Common myeloid progenitor, CD34-positive (primary cell): ENCODE measurements at regions of chr6 and their contacts with region 1.

Region 1: DNA sequence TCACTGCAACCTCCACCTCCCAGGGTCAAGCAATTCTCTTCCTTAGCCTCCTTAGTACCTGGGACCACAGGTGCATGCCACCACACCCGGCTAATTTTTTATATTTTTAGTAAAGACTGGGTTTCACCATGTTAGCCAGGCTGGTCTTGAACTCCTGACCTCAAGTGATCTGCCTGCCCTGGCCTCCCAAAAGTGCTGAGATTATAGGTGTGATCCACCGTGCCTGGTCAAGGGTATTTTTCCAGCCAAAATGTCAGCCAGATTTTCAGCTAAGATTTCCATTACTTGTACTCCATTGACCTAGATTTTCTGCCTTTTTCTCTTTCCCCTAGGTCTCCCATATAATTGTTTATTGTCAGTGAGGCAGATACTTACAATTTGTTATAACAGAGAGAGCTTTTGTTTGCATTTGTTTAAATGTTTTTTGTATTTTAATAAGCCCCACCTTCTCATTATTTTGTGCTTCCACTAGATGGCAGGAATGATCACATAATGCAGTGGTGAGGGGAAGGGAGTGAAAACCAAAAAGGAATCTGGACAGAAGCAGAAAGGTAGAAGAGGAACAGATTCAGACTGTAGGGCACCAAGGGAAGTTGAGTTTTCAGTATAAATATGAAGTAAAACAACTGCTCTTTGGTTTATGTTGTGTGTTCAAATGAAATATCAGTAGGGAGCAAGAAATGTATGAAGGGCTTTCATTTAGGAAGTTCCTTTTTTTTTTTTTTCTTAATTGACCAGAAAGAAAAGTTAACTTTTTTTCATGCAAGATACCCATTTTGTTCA is 29.7 kb downstream of the RPF2 start:
- DNase-seq: peak; percentile 55 to 82 (median 80)
- H3K4me3 ChIP-seq: no peak overlapping the region
- H3K27ac ChIP-seq: no peak overlapping the region
- H3K4me1 ChIP-seq: no peaks in the 10 kb centered on the region
- H3K27me3 ChIP-seq: no peaks in the 10 kb centered on the region

Region 2: GRCh38 chr6:110976575-110976974 is 35.0 kb before region 1 on chr6:
- CTCF ChIA-PET with region 1: no interaction called
- POLR2A ChIA-PET with region 1: no interaction called
- DNase-seq: no peak
- H3K4me3 ChIP-seq: no peak overlapping the region
- H3K27ac ChIP-seq: no peak overlapping the region
- H3K4me1 ChIP-seq: peaks cover 0 to 4% (median 1%) of the 10 kb centered on the region in 4 experiments
- H3K27me3 ChIP-seq: no peaks in the 10 kb centered on the region

Region 3: GRCh38 chr6:110999634-111000270 is 11.8 kb before region 1 on chr6:
- CTCF ChIA-PET with region 1: interaction called, 13 read pairs
- POLR2A ChIA-PET with region 1: no interaction called
- DNase-seq: peak; percentile 57 to 79 (median 77)
- H3K4me3 ChIP-seq: no peak overlapping the region
- H3K27ac ChIP-seq: no peak overlapping the region
- H3K4me1 ChIP-seq: no peaks in the 10 kb centered on the region
- H3K27me3 ChIP-seq: no peaks in the 10 kb centered on the region

Region 4: DNA sequence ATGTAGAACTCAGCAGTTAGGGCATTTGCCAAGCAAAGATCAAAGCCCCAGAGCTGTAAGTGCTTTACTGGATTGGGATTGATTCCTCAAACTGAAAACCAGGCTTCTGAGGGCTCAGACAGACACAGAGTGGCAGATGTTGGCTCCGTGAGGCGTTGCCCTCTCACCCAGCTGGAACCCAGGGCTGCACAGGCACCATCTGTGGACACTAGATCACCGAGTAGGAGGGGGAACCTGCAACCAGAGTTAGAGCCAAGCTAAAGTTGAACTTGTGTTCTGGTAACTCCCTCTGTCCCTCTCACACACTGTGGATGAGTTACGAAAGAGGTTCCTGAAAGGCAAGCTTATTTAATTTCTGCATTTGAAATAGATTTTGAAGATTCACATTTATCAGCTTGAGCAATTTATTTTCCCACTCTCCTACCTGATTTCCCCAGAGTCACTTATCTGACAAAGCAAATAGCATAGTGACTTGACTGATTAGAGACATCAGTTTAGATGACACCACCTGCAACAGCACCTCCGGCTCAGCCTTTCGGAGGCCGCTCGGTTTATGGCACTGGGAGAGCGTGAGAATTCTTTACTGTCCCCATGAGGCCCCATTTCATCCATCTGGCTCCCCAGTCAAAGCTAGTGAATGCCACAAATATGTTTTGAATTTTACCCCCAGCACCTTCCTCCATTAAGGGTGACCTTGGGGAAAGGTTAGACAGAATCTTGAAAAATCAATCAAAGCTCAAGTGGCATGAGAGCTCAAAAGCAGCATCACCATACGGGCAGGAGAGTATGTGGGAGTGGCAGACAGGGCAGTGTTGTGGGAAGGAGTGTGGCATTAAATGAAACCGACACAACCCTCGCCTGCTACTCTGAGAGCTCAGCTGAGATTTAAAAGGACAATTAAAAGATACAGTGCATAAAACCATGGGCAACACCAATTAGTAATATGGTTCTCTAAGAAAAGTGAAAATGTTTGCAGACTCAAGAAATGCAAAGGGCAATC is 18.8 kb after region 1 on chr6:
- CTCF ChIA-PET with region 1: interaction called, 74 read pairs
- POLR2A ChIA-PET with region 1: interaction called, 6 read pairs
- DNase-seq: no peak
- H3K4me3 ChIP-seq: no peak overlapping the region
- H3K27ac ChIP-seq: no peak overlapping the region
- H3K4me1 ChIP-seq: no peaks in the 10 kb centered on the region
- H3K27me3 ChIP-seq: no peaks in the 10 kb centered on the region

Region 5: GRCh38 chr6:111057074-111057752 is 45.7 kb after region 1 on chr6:
- CTCF ChIA-PET with region 1: interaction called, 11 read pairs
- POLR2A ChIA-PET with region 1: no interaction called
- DNase-seq: peak; percentile 39 to 62 (median 60)
- H3K4me3 ChIP-seq: no peak overlapping the region
- H3K27ac ChIP-seq: no peak overlapping the region
- H3K4me1 ChIP-seq: no peaks in the 10 kb centered on the region
- H3K27me3 ChIP-seq: no peaks in the 10 kb centered on the region

Region 6: DNA sequence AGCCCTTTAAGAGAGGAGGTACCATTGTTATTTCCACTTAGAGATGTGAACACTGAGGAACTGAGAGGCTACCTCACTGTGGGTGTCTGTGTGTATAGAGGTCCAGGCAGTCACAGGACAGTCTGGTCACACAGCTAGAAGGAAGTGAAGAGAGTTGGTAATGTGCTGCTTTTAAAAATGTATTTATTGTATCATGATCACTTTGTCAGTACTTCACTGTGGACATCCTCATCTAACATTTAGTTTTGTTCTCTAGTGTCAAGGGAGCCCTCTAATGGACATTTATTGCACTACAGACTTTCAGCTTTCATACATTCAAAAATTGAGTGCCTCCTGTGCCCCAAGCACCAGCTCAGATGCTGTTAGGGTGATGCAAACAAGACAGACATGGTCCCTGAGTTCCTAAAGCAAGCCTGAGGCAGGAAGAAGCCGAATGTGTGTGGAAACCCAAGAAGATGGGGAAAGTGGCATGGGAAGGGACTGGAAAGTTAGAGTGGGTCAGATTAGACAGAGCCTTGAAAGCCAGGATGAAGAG is 198.7 kb after region 1 on chr6:
- CTCF ChIA-PET with region 1: interaction called, 11 read pairs
- POLR2A ChIA-PET with region 1: no interaction called
- DNase-seq: peak; percentile 69 to 81 (median 75)
- H3K4me3 ChIP-seq: no peak overlapping the region
- H3K27ac ChIP-seq: no peak overlapping the region
- H3K4me1 ChIP-seq: peaks cover 0 to 12% (median 5%) of the 10 kb centered on the region in 4 experiments
- H3K27me3 ChIP-seq: no peaks in the 10 kb centered on the region

Region 7: DNA sequence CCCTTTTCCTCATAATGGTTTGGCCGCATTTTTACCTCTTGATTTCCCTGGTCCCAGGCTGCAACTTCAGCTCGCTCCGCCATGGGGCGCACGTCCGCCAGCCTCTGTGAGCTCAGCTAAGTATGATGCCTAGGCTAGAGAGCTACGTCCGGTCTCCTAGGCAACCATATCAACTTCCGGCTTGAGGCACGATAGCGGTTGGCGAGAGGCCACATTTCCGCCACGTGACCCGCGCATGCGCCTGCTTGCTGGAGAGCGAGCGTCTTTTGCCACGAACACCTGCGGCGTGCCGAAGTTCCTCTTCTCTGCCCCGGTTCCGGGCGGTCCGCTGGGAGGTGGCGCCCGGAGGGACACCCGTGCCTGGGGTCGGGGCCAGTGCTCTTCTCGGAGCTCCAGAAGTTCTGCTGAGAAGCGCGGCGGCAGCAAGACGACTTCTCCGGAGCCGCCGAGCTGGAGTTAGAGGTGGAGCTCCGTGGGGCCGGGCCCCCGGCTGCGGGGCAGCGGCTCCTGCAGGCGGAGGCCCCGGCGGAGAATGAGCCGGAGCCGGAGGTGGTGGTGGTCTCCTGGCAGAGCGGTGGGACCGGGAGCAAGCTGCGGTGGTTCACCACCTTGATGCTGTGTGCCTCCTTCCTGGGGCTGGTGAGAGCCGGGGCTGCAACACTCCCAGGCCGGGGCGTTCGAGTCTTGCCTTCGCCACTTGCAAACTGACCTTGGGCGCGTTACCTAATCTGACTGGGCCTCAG is 247.7 kb after region 1 on chr6:
- CTCF ChIA-PET with region 1: interaction called, 10 read pairs
- POLR2A ChIA-PET with region 1: interaction called, 4 read pairs
- DNase-seq: peak; percentile 100
- H3K4me3 ChIP-seq: peak overlapping the region; percentile 58 to 91 (median 74)
- H3K27ac ChIP-seq: peak overlapping the region; percentile 90 to 96
- H3K4me1 ChIP-seq: peaks cover 0 to 17% (median 13%) of the 10 kb centered on the region in 4 experiments
- H3K27me3 ChIP-seq: no peaks in the 10 kb centered on the region

Region 8: GRCh38 chr6:111522393-111523020 is 511.0 kb after region 1 on chr6:
- CTCF ChIA-PET with region 1: no interaction called
- POLR2A ChIA-PET with region 1: no interaction called
- DNase-seq: peak in 2 of 3 donors; percentile 67 to 70
- H3K4me3 ChIP-seq: no peak overlapping the region
- H3K27ac ChIP-seq: no peak overlapping the region
- H3K4me1 ChIP-seq: peaks cover 0 to 35% (median 6%) of the 10 kb centered on the region in 4 experiments
- H3K27me3 ChIP-seq: no peaks in the 10 kb centered on the region